ENCODE measurements at regions of chr2 and their contacts with region 1.

Region 1: GRCh38 chr2:3558205-3559014 is at the start of gene RNASEH1:
- DNase-seq: peak; percentile 99
- ATAC-seq: peak; percentile 99
- H3K4me3 Mint-ChIP-seq: peak within 1 kb of the TSS; percentile 91
- H3K27ac Mint-ChIP-seq: peak within 1 kb of the TSS; percentile 96
- H3K4me1 Mint-ChIP-seq: peaks cover 34% of the 10 kb centered on the region
- H3K27me3 Mint-ChIP-seq: no peaks in the 10 kb centered on the region
- total RNA-seq, gene RNASEH1: 14.6 to 24.0 TPM

Region 2: GRCh38 chr2:2747797-2748301 is 810.6 kb before region 1 on chr2:
- CTCF ChIA-PET with region 1: no interaction called
- POLR2A ChIA-PET with region 1: no interaction called
- intact Hi-C with region 1: no loop called
- DNase-seq: no peak
- ATAC-seq: no peak
- H3K4me3 Mint-ChIP-seq: no peak overlapping the region
- H3K27ac Mint-ChIP-seq: no peak overlapping the region
- H3K4me1 Mint-ChIP-seq: no peaks in the 10 kb centered on the region
- H3K27me3 Mint-ChIP-seq: no peaks in the 10 kb centered on the region

Region 3: GRCh38 chr2:3505771-3506170 is 52.6 kb before region 1 on chr2:
- CTCF ChIA-PET with region 1: no interaction called
- POLR2A ChIA-PET with region 1: no interaction called
- intact Hi-C with region 1: no loop called
- DNase-seq: no peak
- ATAC-seq: no peak
- H3K4me3 Mint-ChIP-seq: no peak overlapping the region
- H3K27ac Mint-ChIP-seq: no peak overlapping the region
- H3K4me1 Mint-ChIP-seq: no peaks in the 10 kb centered on the region
- H3K27me3 Mint-ChIP-seq: no peaks in the 10 kb centered on the region

Region 4: GRCh38 chr2:3518496-3519254 is 39.7 kb before region 1 on chr2:
- CTCF ChIA-PET with region 1: no interaction called
- POLR2A ChIA-PET with region 1: interaction called, 6 read pairs
- intact Hi-C with region 1: loop called (anchors 1 kb)
- DNase-seq: peak; percentile 99
- ATAC-seq: peak; percentile 83
- H3K4me3 Mint-ChIP-seq: peak overlapping the region; percentile 84
- H3K27ac Mint-ChIP-seq: peak overlapping the region; percentile 83
- H3K4me1 Mint-ChIP-seq: peaks cover 38% of the 10 kb centered on the region
- H3K27me3 Mint-ChIP-seq: no peaks in the 10 kb centered on the region

Region 5: DNA sequence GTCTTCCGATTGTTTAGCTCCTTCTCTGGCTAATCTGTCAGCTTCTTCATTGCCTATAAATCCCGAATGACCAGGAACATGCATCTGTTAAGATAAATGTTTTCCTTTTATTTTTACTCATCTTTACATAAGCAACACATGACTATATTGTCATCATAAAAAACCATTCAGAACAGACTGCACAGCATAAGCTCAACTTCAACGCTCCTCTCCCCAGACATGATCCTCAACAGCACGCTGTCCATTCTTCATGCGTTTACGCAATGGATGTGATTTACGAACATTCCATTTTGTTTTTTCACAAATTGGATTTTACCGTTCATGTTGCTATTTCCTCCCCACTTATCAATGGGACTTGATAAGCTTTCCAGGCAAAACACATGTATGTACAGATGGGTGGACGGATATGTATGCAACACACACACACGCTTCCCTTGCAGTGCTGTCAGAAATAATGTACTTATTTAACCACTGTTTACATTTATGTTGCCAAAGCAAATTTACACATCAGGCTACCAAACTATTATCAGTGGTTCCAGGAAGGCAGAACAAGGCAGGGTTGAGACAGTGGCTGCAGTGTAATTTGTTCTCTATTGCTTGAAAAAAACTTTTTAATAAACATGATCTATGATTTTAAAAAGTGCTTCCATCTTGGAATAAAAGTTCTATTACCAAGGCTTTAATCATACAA is 12.5 kb before region 1 on chr2:
- CTCF ChIA-PET with region 1: interaction called, 6 read pairs
- POLR2A ChIA-PET with region 1: interaction called, 4 read pairs
- intact Hi-C with region 1: loop called in 1 of 2 experiments (anchors 1 kb)
- DNase-seq: no peak
- ATAC-seq: no peak
- H3K4me3 Mint-ChIP-seq: no peak overlapping the region
- H3K27ac Mint-ChIP-seq: no peak overlapping the region
- H3K4me1 Mint-ChIP-seq: no peaks in the 10 kb centered on the region
- H3K27me3 Mint-ChIP-seq: no peaks in the 10 kb centered on the region

Region 6: DNA sequence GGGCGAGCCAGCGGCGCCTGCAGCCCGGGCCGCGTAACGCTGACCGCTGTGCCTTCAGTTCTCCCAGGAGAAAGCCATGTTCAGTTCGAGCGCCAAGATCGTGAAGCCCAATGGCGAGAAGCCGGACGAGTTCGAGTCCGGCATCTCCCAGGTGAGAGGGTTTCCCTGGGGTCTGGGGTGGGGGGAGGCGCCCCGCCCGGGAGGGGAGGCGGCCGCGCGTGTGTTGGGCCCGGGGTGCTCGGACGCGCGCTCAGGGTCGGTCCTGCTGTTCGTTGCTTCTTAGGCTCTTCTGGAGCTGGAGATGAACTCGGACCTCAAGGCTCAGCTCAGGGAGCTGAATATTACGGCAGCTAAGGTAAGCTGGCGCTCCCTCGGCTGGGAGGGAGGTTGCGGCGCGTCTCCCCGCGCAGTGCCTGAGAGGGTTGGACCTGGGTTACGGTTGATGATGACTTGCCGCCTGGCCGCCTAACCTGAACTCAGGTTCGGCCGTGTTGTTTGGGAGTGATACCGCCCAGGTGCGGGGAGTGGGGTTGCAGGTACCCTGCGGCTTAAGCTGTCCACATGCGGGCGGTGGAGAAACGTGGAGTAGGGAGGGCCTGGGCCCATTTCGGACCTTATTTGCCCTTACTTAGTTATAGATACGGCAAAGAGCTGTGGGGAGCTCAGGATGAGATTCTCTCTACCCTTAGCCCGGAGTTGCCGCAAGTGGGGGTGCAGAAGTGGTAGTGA is 17.3 kb after region 1 on chr2:
- CTCF ChIA-PET with region 1: interaction called, 3 read pairs
- POLR2A ChIA-PET with region 1: interaction called, 22 read pairs
- intact Hi-C with region 1: loop called (anchors 1 kb)
- DNase-seq: peak; percentile 45
- ATAC-seq: peak; percentile 8
- H3K4me3 Mint-ChIP-seq: peak overlapping the region; percentile 94
- H3K27ac Mint-ChIP-seq: peak overlapping the region; percentile 92
- H3K4me1 Mint-ChIP-seq: peaks cover 47% of the 10 kb centered on the region
- H3K27me3 Mint-ChIP-seq: no peaks in the 10 kb centered on the region